BJ (cell line): ENCODE measurements at regions of chr11 and their contacts with region 1.

Region 1: GRCh38 chr11:130861902-130862860 is 54.1 kb downstream of the SNX19 start:
- DNase-seq: no peak
- H3K4me3 ChIP-seq: no peak overlapping the region
- H3K27me3 ChIP-seq: no peaks in the 10 kb centered on the region
- CTCF ChIP-seq: peak; percentile 99

Region 2: DNA sequence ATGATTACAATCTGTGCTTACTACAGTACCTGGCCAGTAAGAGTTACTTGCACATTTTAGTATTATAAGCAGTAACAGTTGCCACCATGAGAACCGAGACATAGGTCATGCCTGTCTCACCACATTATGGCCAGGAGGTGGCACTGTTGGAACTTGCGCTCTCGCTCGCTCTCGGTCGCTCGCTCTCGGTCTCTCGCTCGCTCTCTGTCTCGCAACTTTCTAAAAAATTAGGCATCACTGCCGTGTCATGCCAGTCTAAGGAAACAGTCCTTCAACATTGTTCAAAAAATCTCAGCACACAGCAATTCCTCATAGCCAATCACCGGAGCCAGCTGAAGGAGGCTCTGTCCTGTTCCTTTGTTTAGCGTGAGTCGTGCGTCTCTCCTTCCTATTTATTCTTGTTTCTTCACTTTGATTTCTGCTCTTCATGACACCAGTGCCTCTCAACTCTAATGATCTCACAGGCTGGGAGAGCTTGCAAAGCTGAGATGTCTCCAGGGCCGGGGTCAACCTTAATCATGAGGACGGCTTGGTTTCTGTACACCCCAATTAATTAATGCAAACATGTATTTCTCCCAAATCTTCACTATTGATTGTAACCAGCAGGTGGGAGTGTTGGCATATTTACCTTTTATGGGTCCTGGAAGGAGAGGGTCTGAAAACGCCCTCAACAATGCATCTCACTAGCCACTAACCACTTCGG is 427.5 kb before region 1 on chr11:
- CTCF ChIA-PET with region 1: interaction called, 421 read pairs
- POLR2A ChIA-PET with region 1: no interaction called
- DNase-seq: no peak
- H3K4me3 ChIP-seq: peak overlapping the region; percentile 66
- H3K27me3 ChIP-seq: peaks cover 8% of the 10 kb centered on the region
- CTCF ChIP-seq: peak; percentile 84

Region 3: DNA sequence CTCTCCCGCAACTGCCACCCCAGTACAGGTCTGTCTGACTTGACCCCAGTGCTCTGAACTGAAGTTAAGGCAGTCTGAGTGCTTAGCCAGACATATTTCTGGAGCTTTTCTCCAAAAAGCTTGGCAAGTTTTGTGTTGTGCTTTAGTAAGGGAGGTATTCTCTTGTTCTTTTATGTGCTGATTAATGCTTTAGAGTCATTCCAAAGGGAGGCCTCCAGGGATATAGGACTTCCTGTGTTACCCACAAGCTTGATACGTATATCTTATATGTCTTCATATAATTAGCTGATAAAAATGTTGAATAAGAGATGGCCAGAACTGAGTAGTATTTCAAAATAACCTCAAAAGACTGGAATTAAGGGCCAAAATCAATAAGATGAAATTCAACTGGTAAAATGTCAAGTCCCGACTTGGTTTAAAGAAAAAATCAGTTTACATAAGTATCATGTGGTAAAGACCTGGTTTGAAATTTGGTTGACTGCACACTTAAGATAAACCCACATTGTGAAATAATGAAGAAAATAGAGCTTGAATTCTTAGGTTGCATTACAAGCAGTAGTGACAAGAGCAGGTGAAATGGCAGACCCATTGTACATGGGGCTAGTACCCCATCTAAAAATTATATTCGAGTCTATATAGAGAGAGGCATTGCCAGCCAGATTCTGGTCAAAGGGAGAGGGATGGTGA is 172.8 kb before region 1 on chr11:
- CTCF ChIA-PET with region 1: no interaction called
- POLR2A ChIA-PET with region 1: no interaction called
- DNase-seq: no peak
- H3K4me3 ChIP-seq: no peak overlapping the region
- H3K27me3 ChIP-seq: no peaks in the 10 kb centered on the region
- CTCF ChIP-seq: no peak

Region 4: GRCh38 chr11:130765951-130766649 is 96.1 kb before region 1 on chr11:
- CTCF ChIA-PET with region 1: interaction called, 14 read pairs
- POLR2A ChIA-PET with region 1: no interaction called
- DNase-seq: peak; percentile 25
- H3K4me3 ChIP-seq: no peak overlapping the region
- H3K27me3 ChIP-seq: no peaks in the 10 kb centered on the region
- CTCF ChIP-seq: no peak

Region 5: DNA sequence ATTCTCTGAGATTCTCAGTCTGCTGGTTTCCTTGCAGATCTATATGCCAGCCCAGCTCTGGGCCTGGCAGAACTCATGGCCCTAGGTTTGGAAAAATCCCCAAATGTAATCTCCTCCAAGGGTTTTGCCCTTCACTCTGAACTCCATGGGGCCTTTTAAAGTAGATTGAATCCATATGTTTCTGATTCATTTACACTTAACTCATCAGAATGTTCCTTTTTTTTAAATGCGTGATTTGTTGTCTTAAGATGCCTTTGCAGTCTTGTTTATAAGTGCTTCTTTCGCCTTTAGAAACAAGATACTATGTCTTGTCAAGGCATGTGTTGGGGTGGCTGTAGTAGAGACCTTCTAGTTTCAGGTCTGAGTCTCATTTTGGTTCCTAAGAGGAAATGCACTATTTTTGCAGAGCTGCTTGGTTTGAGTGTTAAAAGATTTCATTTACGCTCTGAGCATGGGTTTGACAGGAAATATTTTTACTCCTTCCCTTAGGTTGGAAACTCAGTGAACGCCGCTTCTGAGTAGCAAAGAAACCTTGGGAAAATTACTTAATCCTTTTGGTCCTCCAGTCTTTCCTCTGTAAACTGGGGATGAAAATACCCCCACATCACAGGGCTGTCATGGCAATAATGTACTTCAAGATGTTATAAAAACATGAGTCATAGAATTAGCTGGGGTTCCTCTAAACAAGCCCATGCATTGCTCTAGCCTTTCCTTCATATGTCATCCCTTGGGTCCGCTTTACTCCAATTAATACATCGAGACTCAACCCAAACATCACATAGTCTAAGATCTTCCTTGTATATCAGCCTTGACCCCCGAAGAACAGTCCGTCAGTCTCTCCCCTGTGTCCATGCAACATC is 29.4 kb before region 1 on chr11:
- CTCF ChIA-PET with region 1: interaction called, 38 read pairs
- POLR2A ChIA-PET with region 1: interaction called, 4 read pairs
- DNase-seq: no peak
- H3K4me3 ChIP-seq: no peak overlapping the region
- H3K27me3 ChIP-seq: no peaks in the 10 kb centered on the region
- CTCF ChIP-seq: no peak

Region 6: GRCh38 chr11:130882138-130882551 is 20.0 kb after region 1 on chr11:
- CTCF ChIA-PET with region 1: interaction called, 36 read pairs
- POLR2A ChIA-PET with region 1: no interaction called
- DNase-seq: no peak
- H3K4me3 ChIP-seq: no peak overlapping the region
- H3K27me3 ChIP-seq: no peaks in the 10 kb centered on the region
- CTCF ChIP-seq: no peak